Cardiac septum (tissue), 1 donor: ENCODE measurements at regions of chr16 and their contacts with region 1.

Region 1: GRCh38 chr16:15949210-15950160 is at the start of gene ABCC1:
- DNase-seq: no peak
- total RNA-seq, gene ABCC1: 16.6 TPM

Region 2: DNA sequence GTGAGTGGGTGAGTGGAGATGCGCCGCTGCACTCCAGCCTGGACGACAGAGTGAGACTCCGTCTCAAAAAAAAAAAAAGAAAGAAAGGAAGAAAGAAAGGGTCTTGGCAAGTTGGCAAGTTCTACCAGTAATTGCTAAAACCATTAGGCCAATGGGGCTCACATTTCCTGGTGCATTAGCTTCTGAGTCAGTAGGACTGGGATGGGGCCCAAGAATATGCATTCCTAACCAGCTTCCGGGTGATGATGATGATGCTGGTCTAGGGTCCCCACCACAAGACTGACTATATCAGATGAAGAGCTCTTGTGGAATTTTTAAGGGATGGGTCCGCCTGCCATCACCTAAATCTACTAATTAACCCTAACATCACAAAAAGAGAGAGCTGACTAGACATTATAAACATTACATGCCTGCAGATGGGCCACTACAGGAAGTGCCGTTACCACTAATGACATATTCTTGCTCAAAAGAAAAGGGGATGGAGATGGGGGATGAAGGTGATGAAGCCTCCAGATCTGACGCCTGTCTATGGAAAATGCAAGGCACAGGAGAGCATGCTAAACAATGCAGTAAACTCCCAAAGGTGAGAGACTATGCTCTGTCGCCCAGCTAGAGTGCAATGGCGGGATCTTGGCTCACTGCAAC is 105.7 kb before region 1 on chr16:
- intact Hi-C with region 1: no loop called
- DNase-seq: no peak

Region 3: GRCh38 chr16:15865742-15866141 is 83.7 kb before region 1 on chr16:
- intact Hi-C with region 1: no loop called
- DNase-seq: no peak

Region 4: DNA sequence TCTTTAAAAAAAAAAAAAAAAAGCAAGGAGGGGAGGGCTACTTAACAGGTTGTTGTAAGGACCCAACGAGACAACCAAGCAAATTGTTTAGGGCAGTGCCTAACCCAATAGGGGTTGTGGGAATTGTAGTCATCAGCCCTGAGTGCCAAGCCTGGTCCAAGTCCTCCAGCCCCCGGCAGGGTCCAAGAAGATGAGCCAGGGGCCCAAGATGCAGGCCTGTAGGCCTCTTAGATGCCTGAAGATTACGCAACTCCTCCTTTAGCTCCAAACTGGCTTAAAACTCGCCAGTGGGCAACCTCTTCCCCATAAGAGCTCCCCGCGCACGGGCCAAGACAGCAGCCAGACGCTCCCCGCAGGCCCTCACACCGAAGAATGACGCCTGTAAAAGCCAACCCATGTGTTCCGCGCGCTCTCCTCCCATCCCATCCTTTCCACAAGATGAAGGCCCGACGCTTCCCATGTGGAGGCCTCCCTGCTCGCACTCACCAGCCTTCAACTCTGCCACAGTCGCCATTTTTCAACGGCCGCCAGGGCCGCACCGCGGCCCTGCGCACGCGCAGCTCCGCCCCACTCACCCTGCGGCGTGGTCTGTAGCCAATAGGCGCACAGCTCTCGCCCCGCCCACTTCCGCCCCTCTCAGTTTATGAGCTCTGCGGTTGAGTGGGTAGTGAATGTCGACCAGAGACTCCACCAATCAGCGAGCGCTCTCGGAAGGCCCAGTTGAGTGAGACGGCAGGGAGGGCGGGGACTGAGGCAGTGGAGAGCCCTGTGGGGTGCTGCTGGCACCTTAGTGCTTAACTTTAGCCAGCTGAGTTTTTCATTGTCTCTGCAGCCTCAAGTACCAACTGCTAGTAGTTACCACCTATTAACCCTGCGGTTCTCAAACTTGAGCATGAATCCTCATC is 61.2 kb before region 1 on chr16 and contains the start of gene CEP20:
- intact Hi-C with region 1: loop called (anchors 5 kb)
- DNase-seq: peak; percentile 99
- total RNA-seq, gene CEP20: 28.1 TPM

Region 5: DNA sequence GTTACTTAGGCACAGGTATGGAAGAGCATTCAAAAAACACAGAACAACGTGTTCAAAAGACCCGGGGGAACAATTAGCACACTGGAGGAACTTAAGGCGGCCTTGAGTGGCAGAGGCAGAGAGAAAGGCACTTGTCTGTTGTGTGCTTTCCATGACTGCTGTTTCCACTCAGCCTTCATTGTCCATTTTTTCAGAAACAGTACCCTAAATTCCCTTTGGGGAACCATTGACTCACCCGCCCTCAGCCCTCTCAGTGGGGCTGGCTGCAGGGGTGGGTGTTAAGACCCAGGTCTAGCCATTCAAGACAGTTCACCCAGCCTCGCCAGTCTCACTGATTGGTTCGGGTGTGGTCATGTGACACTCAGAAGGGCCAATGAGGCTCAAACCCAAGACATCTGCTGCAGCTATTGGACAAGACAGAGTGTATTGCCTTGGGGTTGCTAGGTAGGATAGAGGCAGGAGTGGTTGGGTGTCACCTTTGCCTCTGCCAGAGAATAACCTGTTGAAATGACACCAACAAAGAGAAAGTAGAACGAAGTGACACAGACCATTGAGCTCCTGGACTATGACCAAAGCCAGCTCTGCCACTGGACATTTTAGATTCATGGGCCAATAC is 41.5 kb before region 1 on chr16:
- intact Hi-C with region 1: no loop called
- DNase-seq: no peak

Region 6: GRCh38 chr16:16021988-16022682 is 72.7 kb after region 1 on chr16:
- intact Hi-C with region 1: loop called (anchors 1 kb)
- DNase-seq: peak; percentile 97

Region 7: GRCh38 chr16:16032271-16032979 is 82.9 kb after region 1 on chr16:
- intact Hi-C with region 1: no loop called
- DNase-seq: no peak